ENCODE measurements at regions of chr1 and their contacts with region 1.

Region 1: DNA sequence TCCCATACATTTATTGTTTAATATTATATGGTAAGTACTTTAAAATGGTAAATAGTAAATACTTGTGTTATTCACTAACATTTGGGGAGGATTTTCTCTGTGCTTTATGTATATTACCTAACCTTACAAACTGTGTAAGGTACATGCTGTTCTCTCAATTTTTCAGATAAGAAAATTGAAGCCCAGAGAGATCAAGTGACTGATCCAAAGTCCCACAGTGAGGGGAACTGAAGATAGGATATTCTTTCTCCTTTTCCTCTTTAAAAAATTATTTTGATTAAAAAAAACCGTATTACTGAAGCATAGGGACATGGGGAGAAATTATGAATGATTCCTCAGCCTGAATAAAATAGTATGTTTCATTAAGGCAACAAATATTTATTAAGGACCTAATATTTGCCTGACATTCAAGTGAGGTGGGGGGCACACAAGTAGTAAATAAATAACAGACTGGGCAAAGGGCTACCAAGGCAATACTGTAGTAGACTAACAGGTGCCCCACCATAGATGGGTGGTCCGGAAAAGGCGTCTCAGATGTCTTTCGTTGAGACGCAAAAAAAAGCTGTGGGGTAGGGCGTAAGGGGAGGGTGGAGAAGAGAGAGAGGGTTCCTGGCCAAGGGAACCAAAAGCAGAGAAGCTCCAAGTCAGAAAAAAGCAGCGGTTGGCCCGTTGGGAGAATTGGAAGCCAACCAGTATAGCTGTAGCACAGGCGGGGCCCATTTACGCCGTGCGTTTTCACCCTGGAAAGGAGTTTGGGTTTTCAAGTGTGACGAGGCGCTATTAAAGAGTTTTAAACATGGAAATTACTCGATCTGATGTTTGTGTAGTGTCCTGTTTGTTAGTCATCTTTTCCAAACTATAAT is 944 bp upstream of the AGO3 start:
- DNase-seq: no peak
- H3K4me3 ChIP-seq: peak overlapping the region; percentile 79
- H3K4me3 Mint-ChIP-seq: peak overlapping the region; percentile 86
- H3K27ac Mint-ChIP-seq: peak overlapping the region; percentile 90
- H3K4me1 ChIP-seq: peaks cover 6% of the 10 kb centered on the region; the same call in 1 of the 2 replicates
- H3K4me1 Mint-ChIP-seq: peaks cover 9% of the 10 kb centered on the region
- H3K27me3 ChIP-seq: no peaks in the 10 kb centered on the region
- H3K27me3 Mint-ChIP-seq: no peaks in the 10 kb centered on the region
- CTCF ChIP-seq: no peak

Region 2: GRCh38 chr1:35298464-35298863 is 631.5 kb before region 1 on chr1:
- CTCF ChIA-PET with region 1: no interaction called
- POLR2A ChIA-PET with region 1: interaction called, 10 read pairs
- intact Hi-C with region 1: no loop called
- DNase-seq: peak in 1 of 2 experiments; percentile 14
- H3K4me3 ChIP-seq: no peak overlapping the region
- H3K4me3 Mint-ChIP-seq: no peak overlapping the region
- H3K27ac Mint-ChIP-seq: no peak overlapping the region
- H3K4me1 ChIP-seq: no peaks in the 10 kb centered on the region
- H3K4me1 Mint-ChIP-seq: peaks cover 6% of the 10 kb centered on the region
- H3K27me3 ChIP-seq: no peaks in the 10 kb centered on the region
- H3K27me3 Mint-ChIP-seq: no peaks in the 10 kb centered on the region
- CTCF ChIP-seq: peak in 1 of 2 experiments; percentile 19

Measured in Caco-2 (cell line).